ENCODE measurements at regions of chr19 and their contacts with region 1.

Region 1: GRCh38 chr19:46542428-46543230 is 47.0 kb upstream of the PNMA8B start:
- DNase-seq: peak; percentile 69 to 92
- H3K4me3 ChIP-seq: no peak overlapping the region
- H3K27ac ChIP-seq: no peak overlapping the region
- H3K4me1 ChIP-seq: peaks cover 2 to 5% (median 4%) of the 10 kb centered on the region in 4 experiments; a peak in 4 of 7 replicates
- H3K27me3 ChIP-seq: no peaks in the 10 kb centered on the region
- CTCF ChIP-seq: peak; percentile 12 to 84 (median 77)
- EP300 ChIP-seq: no peak
- POLR2A ChIP-seq: no peak
- RAD21 ChIP-seq: peak; percentile 83

Region 2: DNA sequence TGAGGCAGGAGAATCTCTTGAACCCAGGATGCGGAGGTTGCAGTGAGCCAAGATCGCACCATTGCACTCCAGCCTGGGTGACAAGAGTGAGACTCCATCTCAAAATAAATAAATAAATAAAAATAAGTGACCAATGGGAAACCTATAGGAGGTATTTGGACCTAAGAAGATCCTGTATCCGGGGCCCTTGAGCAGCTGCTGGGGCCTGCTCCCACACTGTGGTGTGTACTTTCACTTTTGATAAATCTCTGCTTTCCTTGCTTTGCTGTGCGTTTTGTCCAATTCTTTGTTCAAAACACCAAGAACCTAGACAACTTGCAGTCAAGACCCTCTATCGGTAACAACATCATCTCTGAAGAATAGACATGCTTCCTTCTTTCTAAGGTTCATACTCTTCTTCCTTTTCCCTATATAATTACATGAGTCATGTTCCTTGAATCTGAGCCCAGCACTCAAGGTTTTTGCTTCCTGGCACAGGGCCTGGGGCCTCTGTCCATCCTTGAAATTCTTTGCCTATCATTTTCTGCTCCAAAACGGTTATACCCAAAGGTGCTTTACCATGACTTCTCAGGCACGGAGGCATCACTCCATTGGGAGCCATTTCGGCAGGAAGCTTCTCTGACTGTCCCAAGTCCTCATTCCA is 99.7 kb before region 1 on chr19:
- CTCF ChIA-PET with region 1: no interaction called
- POLR2A ChIA-PET with region 1: no interaction called
- DNase-seq: no peak
- H3K4me3 ChIP-seq: no peak overlapping the region
- H3K27ac ChIP-seq: no peak overlapping the region
- H3K4me1 ChIP-seq: no peaks in the 10 kb centered on the region
- H3K27me3 ChIP-seq: no peaks in the 10 kb centered on the region
- CTCF ChIP-seq: no peak
- EP300 ChIP-seq: no peak
- POLR2A ChIP-seq: no peak
- RAD21 ChIP-seq: no peak

Region 3: DNA sequence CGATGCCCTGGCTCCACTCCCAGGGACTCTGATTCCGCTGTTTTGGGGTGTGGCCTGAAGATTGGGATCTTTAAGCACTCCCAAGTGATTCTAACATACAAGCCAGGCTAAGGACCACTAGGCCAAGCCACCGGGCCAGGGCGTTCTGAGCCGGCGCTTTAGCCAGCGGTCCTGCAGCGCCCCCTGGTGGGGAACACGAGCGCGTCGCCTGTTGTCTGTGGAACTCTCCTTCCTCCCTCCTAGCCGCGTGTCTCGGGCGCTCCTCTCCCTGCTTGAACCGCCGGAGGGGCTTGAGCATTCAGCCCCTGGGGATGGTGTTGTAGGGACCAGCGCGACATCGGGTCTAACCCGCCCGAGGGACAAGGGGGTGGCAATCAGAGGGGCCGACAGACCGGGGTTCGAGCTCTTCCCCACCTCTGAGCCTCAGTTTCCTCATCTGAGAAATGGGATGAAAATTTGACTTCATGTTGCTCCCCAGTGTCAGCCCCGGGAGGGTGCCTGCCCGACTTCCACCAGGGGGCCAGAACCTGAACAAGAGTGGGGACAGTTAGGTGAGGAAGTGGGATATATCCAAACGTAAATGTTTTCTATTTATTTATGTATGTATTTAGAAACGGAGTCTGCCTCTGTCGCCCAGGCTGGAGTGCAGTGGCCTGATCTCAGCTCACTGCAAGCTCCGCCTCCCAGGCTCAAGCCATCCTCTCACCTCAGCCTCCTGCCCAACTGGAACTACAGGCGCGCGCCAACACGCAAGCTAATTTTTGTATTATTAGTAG is 29.0 kb before region 1 on chr19:
- CTCF ChIA-PET with region 1: interaction called, 31 read pairs
- POLR2A ChIA-PET with region 1: interaction called, 5 read pairs
- DNase-seq: peak; percentile 65 to 99
- H3K4me3 ChIP-seq: no peak overlapping the region
- H3K27ac ChIP-seq: no peak overlapping the region
- H3K4me1 ChIP-seq: no peaks in the 10 kb centered on the region
- H3K27me3 ChIP-seq: no peaks in the 10 kb centered on the region
- CTCF ChIP-seq: peak; percentile 87 to 98 (median 91)
- EP300 ChIP-seq: no peak
- POLR2A ChIP-seq: no peak
- RAD21 ChIP-seq: peak; percentile 97 to 99

Region 4: GRCh38 chr19:46520616-46521015 is 22.0 kb before region 1 on chr19:
- CTCF ChIA-PET with region 1: interaction called, 73 read pairs
- POLR2A ChIA-PET with region 1: interaction called, 5 read pairs
- DNase-seq: no peak
- H3K4me3 ChIP-seq: no peak overlapping the region
- H3K27ac ChIP-seq: no peak overlapping the region
- H3K4me1 ChIP-seq: no peaks in the 10 kb centered on the region
- H3K27me3 ChIP-seq: no peaks in the 10 kb centered on the region
- CTCF ChIP-seq: no peak
- EP300 ChIP-seq: no peak
- POLR2A ChIP-seq: no peak
- RAD21 ChIP-seq: no peak

Region 5: DNA sequence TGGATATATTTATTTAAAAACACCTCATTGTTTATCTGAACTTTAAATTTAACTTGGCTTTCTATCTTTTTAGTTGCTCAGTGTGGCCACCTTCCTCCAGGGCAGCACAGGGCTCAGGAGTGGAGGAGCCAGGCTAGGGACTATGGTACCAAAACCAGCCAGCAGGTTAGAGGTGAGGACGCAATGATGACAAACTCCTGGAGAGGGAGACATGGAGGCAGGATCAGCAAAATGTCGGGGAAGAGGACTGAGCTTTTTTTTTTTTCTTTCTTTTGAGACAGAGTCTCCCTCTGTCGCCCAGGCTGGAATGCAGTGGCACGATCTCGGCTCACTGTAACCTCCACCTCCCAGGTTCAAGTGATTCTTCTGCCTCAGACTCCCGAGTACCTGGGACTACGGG is 28.9 kb after region 1 on chr19:
- CTCF ChIA-PET with region 1: interaction called, 20 read pairs
- POLR2A ChIA-PET with region 1: no interaction called
- DNase-seq: peak; percentile 44 to 66
- H3K4me3 ChIP-seq: no peak overlapping the region
- H3K27ac ChIP-seq: no peak overlapping the region
- H3K4me1 ChIP-seq: no peaks in the 10 kb centered on the region; a peak in 2 of 7 replicates
- H3K27me3 ChIP-seq: no peaks in the 10 kb centered on the region; a peak in 1 of 7 replicates
- CTCF ChIP-seq: peak; percentile 57 to 95 (median 72)
- EP300 ChIP-seq: no peak
- POLR2A ChIP-seq: no peak
- RAD21 ChIP-seq: peak in 1 of 2 experiments; percentile 44; a peak in 3 of 4 replicates